ENCODE measurements at regions of chr15 and their contacts with region 1.

Region 1: GRCh38 chr15:64422697-64423096 is 35.1 kb downstream of the TRIP4 start:
- DNase-seq: no peak
- H3K4me3 ChIP-seq: no peak overlapping the region
- H3K27ac ChIP-seq: no peak overlapping the region
- H3K4me1 ChIP-seq: no peaks in the 10 kb centered on the region
- H3K27me3 ChIP-seq: no peaks in the 10 kb centered on the region
- CTCF ChIP-seq: no peak

Region 2: GRCh38 chr15:63772520-63772919 is 650.2 kb before region 1 on chr15:
- CTCF ChIA-PET with region 1: no interaction called
- POLR2A ChIA-PET with region 1: no interaction called
- intact Hi-C with region 1: no loop called
- DNase-seq: no peak
- H3K4me3 ChIP-seq: no peak overlapping the region
- H3K27ac ChIP-seq: no peak overlapping the region
- H3K4me1 ChIP-seq: no peaks in the 10 kb centered on the region
- H3K27me3 ChIP-seq: no peaks in the 10 kb centered on the region
- CTCF ChIP-seq: no peak

Region 3: GRCh38 chr15:64478863-64479262 is 56.2 kb after region 1 on chr15:
- CTCF ChIA-PET with region 1: no interaction called
- POLR2A ChIA-PET with region 1: interaction called, 10 read pairs
- intact Hi-C with region 1: no loop called
- DNase-seq: no peak
- H3K4me3 ChIP-seq: no peak overlapping the region
- H3K27ac ChIP-seq: no peak overlapping the region
- H3K4me1 ChIP-seq: no peaks in the 10 kb centered on the region
- H3K27me3 ChIP-seq: no peaks in the 10 kb centered on the region
- CTCF ChIP-seq: no peak

Measured in PC-9 (cell line).